ENCODE measurements at regions of chr17 and their contacts with region 1.

Region 1: DNA sequence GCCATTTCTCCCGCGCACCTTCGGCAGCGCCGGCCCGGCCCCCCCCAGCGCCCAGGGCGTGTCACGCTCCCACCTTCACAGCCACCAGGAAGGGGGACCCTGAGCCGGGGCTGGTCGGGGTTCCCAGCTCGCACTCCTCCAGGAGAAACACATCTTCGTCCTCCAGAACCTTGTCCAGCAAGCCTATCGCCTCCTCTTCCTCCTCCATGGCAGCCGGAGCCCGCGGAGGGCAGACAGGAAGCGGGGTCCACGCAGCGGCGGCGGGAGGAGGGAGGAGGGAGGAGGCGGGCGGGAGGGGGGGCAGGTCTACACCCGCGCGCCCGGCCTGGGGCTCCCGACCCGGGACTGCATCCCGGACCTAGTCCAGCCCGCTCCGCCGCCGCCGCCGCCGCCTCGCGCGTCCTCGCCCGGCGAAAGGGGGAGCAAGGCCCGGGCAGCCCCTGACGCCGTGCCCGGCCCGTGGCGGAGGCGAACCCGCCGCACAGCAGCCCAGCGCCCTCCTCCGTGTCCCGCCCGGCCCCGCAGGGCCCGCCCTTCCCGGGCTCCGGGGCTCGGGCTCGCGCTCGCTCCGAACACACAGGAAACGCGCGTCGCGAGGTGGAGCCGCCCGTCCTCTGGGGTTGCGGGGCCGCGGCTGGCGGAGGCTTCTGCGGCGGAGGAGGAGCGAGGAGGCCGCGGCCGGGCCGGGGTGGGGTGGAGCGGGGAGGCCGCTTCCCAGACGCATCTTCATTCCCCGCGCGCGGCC is 70.7 kb downstream of the ABR start:
- H3K4me3 Mint-ChIP-seq: peak overlapping the region; percentile 94
- H3K27ac Mint-ChIP-seq: peak overlapping the region; percentile 97
- H3K4me1 Mint-ChIP-seq: peaks cover 77% of the 10 kb centered on the region
- H3K27me3 Mint-ChIP-seq: no peaks in the 10 kb centered on the region

Region 2: GRCh38 chr17:1098387-1098786 is 10.6 kb before region 1 on chr17:
- intact Hi-C with region 1: loop called (anchors 1 kb)
- H3K4me3 Mint-ChIP-seq: peak overlapping the region; percentile 59
- H3K27ac Mint-ChIP-seq: peak overlapping the region; percentile 93
- H3K4me1 Mint-ChIP-seq: peaks cover 90% of the 10 kb centered on the region
- H3K27me3 Mint-ChIP-seq: no peaks in the 10 kb centered on the region

Region 3: GRCh38 chr17:1170739-1171138 is 61.7 kb after region 1 on chr17:
- intact Hi-C with region 1: no loop called
- H3K4me3 Mint-ChIP-seq: no peak overlapping the region
- H3K27ac Mint-ChIP-seq: no peak overlapping the region
- H3K4me1 Mint-ChIP-seq: peaks cover 86% of the 10 kb centered on the region
- H3K27me3 Mint-ChIP-seq: no peaks in the 10 kb centered on the region

Measured in dendritic cell treated with granulocyte-macrophage colony-stimulating factor and Interleukin-4, amounts not matched to agents 40 ng/mL and 50 ng/mL, for 4 days (primary cell).